ENCODE measurements at regions of chr4 and their contacts with region 1.

Region 1: GRCh38 chr4:87375719-87376291 is 15.2 kb downstream of the HSD17B11 start:
- DNase-seq: no peak
- H3K4me3 ChIP-seq: no peak overlapping the region
- H3K27ac ChIP-seq: peak overlapping the region in 1 of 2 donors; percentile 2
- H3K4me1 ChIP-seq: peaks cover 0 to 4% of the 10 kb centered on the region in 2 donors
- H3K27me3 ChIP-seq: no peaks in the 10 kb centered on the region
- CTCF ChIP-seq: peak; percentile 60 to 72 (median 70)

Region 2: GRCh38 chr4:87465739-87466366 is 90.0 kb after region 1 on chr4:
- intact Hi-C with region 1: loop called (anchors 1 kb)
- DNase-seq: no peak
- H3K4me3 ChIP-seq: no peak overlapping the region
- H3K27ac ChIP-seq: no peak overlapping the region
- H3K4me1 ChIP-seq: no peaks in the 10 kb centered on the region
- H3K27me3 ChIP-seq: no peaks in the 10 kb centered on the region
- CTCF ChIP-seq: peak; percentile 34 to 57 (median 40)

Region 3: DNA sequence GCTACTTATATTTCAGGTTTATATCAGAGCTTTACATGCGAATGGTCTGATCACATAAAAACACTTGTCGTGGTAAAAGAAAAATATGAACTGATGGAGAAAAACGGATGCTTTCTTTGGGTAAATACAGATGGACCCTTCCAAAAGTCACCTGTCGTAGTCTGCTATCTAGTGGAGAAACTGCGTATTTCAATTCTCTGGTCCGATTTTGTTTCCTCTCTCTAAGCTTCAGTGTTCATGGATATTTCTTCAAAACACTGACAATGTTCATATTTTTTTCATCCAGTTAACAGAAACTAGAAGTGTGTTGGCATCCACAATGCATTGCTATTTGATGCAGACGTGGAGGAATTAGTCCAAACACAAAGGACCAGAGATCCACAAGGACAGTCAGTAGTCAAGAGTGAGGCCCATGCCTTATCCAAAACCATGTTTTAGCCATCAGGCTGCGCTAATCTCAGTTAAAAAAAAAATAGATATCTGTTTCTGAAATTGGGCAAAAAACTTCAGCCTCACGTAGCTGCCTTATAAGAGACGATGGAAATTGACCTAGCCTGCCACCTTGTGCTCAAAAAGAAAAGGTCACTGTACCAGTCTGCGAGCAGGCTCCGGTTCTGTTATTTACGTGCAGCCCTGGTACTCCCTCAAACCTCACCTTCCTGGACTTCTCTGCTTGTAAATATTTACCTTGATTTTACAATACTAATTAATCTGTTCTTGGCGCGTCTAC is 473.0 kb after region 1 on chr4:
- intact Hi-C with region 1: loop called (anchors 1 kb)
- DNase-seq: peak in 1 of 2 donors; percentile 80
- H3K4me3 ChIP-seq: peak overlapping the region; percentile 41 to 60
- H3K27ac ChIP-seq: peak overlapping the region; percentile 14 to 59
- H3K4me1 ChIP-seq: peaks cover 0 to 6% of the 10 kb centered on the region in 2 donors
- H3K27me3 ChIP-seq: no peaks in the 10 kb centered on the region
- CTCF ChIP-seq: peak; percentile 61 to 68 (median 63)

Measured in ascending aorta (tissue), 2 donors.